CD4-positive, alpha-beta memory T cell (primary cell): ENCODE measurements at regions of chr19 and their contacts with region 1.

Region 1: GRCh38 chr19:15672580-15673175 is at the start of gene CYP4F12:
- DNase-seq: peak; percentile 21 to 45 (median 27)
- H3K4me3 ChIP-seq: no peak within 1 kb of the TSS
- H3K4me3 Mint-ChIP-seq: peak within 1 kb of the TSS in 5 of 8 donors; percentile 7 to 59 (median 22)
- H3K27ac ChIP-seq: no peak within 1 kb of the TSS
- H3K27ac Mint-ChIP-seq: peak within 1 kb of the TSS; percentile 78 to 85 (median 83)
- H3K4me1 ChIP-seq: peaks cover 17% of the 10 kb centered on the region
- H3K4me1 Mint-ChIP-seq: peaks cover 17 to 36% (median 27%) of the 10 kb centered on the region in 4 donors
- H3K27me3 ChIP-seq: no peaks in the 10 kb centered on the region
- H3K27me3 Mint-ChIP-seq: peaks cover 0 to 3% of the 10 kb centered on the region in 2 donors
- total RNA-seq, gene CYP4F12: 3.7 to 5.2 TPM

Region 2: DNA sequence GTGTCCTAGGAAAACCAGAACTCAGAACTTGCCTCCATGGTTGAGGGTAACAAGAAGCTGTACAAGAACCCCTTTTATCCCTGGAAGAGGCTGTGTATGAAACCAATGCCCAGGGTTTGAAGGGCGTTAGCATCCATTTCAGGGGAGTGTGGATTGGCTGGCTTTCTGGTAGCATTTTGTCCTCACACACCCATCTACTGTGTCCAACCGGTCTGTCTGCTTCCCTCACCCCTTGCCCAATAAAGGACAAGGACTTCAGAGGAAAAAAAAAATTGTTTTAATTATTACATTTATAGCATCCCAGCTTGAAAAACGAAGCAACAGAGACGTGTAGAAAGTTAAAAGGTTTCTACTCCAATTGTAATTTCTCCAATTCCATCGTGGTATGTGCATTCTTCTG is 60.3 kb before region 1 on chr19:
- CTCF ChIA-PET with region 1: no interaction called
- POLR2A ChIA-PET with region 1: no interaction called
- intact Hi-C with region 1: no loop called
- DNase-seq: no peak
- H3K4me3 ChIP-seq: no peak overlapping the region
- H3K4me3 Mint-ChIP-seq: no peak overlapping the region
- H3K27ac ChIP-seq: no peak overlapping the region
- H3K27ac Mint-ChIP-seq: no peak overlapping the region
- H3K4me1 ChIP-seq: no peaks in the 10 kb centered on the region
- H3K4me1 Mint-ChIP-seq: no peaks in the 10 kb centered on the region
- H3K27me3 ChIP-seq: no peaks in the 10 kb centered on the region
- H3K27me3 Mint-ChIP-seq: peaks cover 5 to 10% of the 10 kb centered on the region in 2 donors

Region 3: DNA sequence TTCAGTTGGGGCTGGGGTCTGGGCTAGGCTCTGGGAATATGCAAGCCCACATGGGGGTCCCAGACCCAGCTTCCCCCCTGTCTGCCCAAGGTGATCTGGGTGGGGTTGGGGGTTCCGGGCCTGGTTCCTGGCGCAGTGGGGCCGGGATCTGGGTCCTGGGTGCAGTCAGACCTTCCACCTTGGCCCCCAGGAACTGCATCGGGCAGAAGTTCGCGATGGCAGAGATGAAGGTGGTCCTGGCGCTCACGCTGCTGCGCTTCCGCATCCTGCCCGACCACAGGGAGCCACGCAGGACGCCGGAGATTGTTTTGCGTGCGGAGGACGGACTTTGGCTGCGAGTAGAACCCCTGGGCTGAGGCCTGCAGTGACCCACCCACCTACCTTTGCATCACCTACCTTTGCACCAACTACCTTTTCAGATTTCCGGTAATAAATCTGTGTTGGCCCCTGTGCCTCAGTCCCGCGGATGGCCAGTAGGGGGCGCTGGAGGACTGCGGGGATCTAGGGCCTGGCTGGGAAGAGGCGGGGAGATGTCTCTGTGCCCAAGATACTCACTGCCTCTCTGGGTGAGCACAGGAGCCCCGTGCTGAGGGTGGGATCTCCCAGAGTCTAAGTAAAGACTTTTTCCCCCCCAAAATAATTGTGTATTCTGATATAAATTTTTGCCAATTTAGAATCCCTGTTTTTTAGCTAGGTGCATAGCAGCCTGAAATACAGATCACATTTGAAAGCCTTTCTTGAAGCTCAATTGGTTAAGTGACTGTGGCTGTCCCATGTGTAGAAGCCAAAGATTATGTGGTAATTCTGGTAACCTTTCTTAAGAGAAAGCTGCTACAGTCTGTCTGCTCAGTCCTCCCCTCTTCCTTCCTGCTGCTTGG is 43.4 kb before region 1 on chr19:
- CTCF ChIA-PET with region 1: no interaction called
- POLR2A ChIA-PET with region 1: no interaction called
- intact Hi-C with region 1: loop called (anchors 2 kb)
- DNase-seq: peak; percentile 80 to 86 (median 81)
- H3K4me3 ChIP-seq: no peak overlapping the region
- H3K4me3 Mint-ChIP-seq: no peak overlapping the region
- H3K27ac ChIP-seq: no peak overlapping the region
- H3K27ac Mint-ChIP-seq: no peak overlapping the region
- H3K4me1 ChIP-seq: peaks cover 14% of the 10 kb centered on the region
- H3K4me1 Mint-ChIP-seq: peaks cover 2 to 13% (median 9%) of the 10 kb centered on the region in 4 donors
- H3K27me3 ChIP-seq: no peaks in the 10 kb centered on the region
- H3K27me3 Mint-ChIP-seq: peaks cover 3 to 14% of the 10 kb centered on the region in 2 donors